AG04450 (cell line): ENCODE measurements at regions of chr15 and their contacts with region 1.

Region 1: DNA sequence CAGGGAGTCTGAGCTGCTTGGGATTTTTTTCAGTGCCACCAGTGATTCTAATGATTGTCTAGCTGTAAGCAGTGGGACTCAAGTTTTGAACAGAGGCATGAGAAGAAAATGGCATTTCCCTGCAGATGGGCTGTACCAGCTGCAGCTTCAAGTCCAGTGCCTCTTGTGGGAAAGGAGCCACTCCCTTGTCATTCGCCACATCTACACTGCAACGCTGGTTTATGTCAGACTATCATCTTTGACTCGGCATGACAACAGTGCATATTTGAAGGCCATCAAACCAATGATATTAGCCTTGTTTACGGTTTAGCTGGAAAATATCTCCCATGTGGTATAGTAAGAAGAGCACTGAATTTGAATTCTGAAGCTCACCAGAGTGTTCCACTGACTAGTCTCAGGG is 22.2 kb downstream of the SCG5 start:
- DNase-seq: no peak
- H3K4me3 ChIP-seq: no peak overlapping the region
- H3K27ac ChIP-seq: no peak overlapping the region
- H3K27me3 ChIP-seq: no peaks in the 10 kb centered on the region
- CTCF ChIP-seq: no peak

Region 2: DNA sequence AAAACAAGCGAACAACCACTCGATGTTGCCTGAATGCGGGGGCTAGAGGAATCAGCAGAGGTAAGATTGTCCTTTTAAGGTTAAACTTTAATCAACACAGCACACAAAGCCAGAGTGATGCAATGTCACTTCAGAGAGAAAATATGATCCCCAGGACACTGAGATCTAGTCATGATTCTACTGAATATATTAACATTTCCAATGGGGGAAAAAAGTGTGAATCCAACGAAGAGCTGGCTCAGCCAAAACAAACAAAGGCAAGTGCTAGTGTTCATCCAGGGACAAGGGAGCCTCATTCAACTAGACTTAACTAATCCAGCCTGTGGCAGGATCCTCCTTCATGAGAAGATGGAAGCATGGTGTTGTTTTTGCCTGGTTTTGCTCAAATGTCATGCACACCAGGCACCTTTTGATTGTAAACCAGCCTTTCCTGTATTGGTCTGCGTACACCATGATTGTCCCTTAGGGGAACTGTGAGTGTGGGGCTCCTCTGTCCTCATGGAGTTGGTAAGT is 13.6 kb after region 1 on chr15:
- CTCF ChIA-PET with region 1: interaction called, 17 read pairs
- POLR2A ChIA-PET with region 1: interaction called, 5 read pairs
- DNase-seq: no peak
- H3K4me3 ChIP-seq: no peak overlapping the region
- H3K27ac ChIP-seq: no peak overlapping the region
- H3K27me3 ChIP-seq: no peaks in the 10 kb centered on the region
- CTCF ChIP-seq: no peak

Region 3: GRCh38 chr15:32723171-32723948 is 59.7 kb after region 1 on chr15:
- CTCF ChIA-PET with region 1: interaction called, 37 read pairs
- POLR2A ChIA-PET with region 1: interaction called, 4 read pairs
- DNase-seq: no peak
- H3K4me3 ChIP-seq: peak overlapping the region; percentile 18; the same call in 1 of the 2 replicates
- H3K27ac ChIP-seq: no peak overlapping the region
- H3K27me3 ChIP-seq: no peaks in the 10 kb centered on the region
- CTCF ChIP-seq: no peak

Region 4: GRCh38 chr15:32956006-32956405 is 292.3 kb after region 1 on chr15:
- CTCF ChIA-PET with region 1: interaction called, 28 read pairs
- POLR2A ChIA-PET with region 1: no interaction called
- DNase-seq: peak; percentile 81
- H3K4me3 ChIP-seq: no peak overlapping the region
- H3K27ac ChIP-seq: no peak overlapping the region
- H3K27me3 ChIP-seq: no peaks in the 10 kb centered on the region
- CTCF ChIP-seq: peak; percentile 79

Region 5: GRCh38 chr15:33067941-33068481 is 404.3 kb after region 1 on chr15:
- CTCF ChIA-PET with region 1: no interaction called
- POLR2A ChIA-PET with region 1: no interaction called
- DNase-seq: no peak
- H3K4me3 ChIP-seq: no peak overlapping the region
- H3K27ac ChIP-seq: peak overlapping the region; percentile 78
- H3K27me3 ChIP-seq: no peaks in the 10 kb centered on the region
- CTCF ChIP-seq: no peak